ENCODE measurements at regions of chr10 and their contacts with region 1.

Region 1: DNA sequence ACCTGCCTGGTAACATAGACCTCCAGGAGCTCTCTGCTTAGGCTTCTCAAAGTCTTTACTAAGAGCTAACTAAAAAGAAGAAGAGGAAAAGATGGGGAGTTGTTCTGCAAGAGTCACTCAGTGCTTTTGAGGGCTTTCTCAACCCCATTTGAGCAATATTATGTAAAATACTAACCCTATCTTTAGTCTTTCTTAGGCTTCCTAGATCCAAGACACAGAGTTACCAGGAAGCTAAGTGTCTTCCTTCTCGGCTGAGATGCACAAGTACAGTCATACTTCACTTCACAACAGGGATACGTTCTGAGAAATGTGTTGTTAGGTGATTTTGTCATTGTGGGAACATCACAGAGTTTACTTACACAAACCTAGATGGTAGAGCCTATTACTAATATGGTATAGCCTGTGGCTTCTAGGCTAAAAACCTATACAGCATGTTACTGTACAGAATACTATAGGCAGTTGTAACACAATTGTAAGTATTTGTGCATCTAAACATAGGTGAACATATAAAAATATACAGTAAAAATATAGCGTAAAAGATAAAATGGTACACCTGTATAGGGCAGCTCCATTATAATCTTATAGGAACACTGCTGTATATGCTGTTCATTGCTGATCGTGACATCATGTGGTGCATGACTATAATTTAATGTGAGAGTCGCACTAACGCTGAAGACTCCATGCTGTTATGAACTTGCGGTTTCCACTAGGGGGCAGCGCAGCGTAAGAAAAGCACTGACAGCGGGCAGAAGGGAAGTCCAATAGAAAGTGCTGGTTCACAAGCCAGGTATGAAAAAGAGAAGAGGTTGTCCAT is 16.3 kb downstream of the ANKRD22 start:
- DNase-seq: peak; percentile 94
- ATAC-seq: peak; percentile 92
- H3K4me3 Mint-ChIP-seq: no peak overlapping the region
- H3K27ac Mint-ChIP-seq: no peak overlapping the region
- H3K4me1 Mint-ChIP-seq: peaks cover 40% of the 10 kb centered on the region
- H3K27me3 Mint-ChIP-seq: no peaks in the 10 kb centered on the region

Region 2: GRCh38 chr10:88565072-88565471 is 270.2 kb before region 1 on chr10:
- CTCF ChIA-PET with region 1: interaction called, 10 read pairs
- POLR2A ChIA-PET with region 1: no interaction called
- DNase-seq: no peak
- ATAC-seq: peak; percentile 47
- H3K4me3 Mint-ChIP-seq: no peak overlapping the region
- H3K27ac Mint-ChIP-seq: no peak overlapping the region
- H3K4me1 Mint-ChIP-seq: no peaks in the 10 kb centered on the region
- H3K27me3 Mint-ChIP-seq: peaks cover 13% of the 10 kb centered on the region

Region 3: DNA sequence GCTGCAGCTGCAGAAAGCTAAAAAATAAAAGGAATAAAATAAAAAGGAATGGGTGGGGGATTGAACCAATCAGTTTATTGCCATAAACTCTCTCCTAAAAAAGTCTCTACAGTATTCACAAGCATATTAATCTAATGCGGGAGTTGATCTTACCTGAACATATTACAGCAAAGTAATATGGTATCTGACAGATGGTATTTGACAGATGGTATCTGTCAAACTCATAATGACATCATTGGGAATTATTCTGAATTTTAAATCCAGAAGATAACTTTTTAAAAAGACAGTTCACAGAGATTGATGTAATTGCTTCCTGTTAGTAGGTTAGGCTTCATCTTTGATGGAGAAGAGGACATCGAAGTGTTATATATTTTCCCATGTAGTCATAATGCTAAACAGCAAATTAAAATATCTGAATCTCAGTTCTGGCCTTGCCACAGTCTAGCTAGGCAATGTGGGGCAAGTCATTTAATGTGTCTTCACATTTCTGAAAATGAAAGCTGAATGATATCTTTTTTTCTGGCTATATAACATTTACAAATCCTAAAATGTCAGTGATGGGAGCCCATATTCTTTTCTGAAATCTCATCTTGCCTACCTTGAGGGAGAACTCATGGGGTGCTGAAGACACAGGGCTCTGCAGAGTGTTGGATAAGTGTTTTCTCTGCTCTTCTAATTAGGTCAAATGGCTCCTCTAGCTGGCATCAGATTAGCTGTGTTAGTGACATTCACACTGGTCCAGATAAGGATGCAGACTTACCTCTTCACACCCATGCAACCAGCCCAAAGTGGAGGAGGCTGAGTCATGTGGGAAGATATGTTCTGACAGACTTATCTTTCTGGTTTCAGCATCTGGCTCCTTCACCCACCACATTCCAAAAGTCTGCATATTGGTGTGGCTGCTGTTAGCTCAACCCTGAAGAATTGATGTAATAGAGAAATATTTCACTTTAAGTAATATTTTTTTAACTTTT is 34.9 kb before region 1 on chr10:
- CTCF ChIA-PET with region 1: interaction called, 10 read pairs
- POLR2A ChIA-PET with region 1: interaction called, 3 read pairs
- DNase-seq: no peak
- ATAC-seq: no peak
- H3K4me3 Mint-ChIP-seq: no peak overlapping the region
- H3K27ac Mint-ChIP-seq: no peak overlapping the region
- H3K4me1 Mint-ChIP-seq: peaks cover 3% of the 10 kb centered on the region
- H3K27me3 Mint-ChIP-seq: peaks cover 19% of the 10 kb centered on the region

Region 4: DNA sequence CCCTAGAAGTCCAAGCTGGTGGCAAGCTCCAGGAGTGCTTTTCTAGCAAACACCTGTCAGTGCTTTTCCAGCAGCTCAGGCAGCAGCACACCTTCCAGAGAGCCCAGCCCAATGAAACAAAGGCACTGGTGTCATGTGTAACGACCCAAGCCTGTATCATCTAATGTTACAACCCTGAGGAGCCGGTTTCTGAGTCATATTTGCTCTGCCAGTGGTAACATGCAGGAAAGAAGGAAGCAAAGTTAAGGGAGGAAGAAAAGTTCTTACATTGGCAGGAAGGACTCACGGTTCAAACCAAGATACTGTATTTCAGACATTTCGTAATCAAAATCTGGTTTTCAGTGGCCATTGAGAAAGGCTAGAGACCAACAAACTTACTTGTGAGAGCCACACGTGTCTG is 16.4 kb after region 1 on chr10 and contains the start of gene ANKRD22:
- CTCF ChIA-PET with region 1: interaction called, 73 read pairs
- POLR2A ChIA-PET with region 1: interaction called, 3 read pairs
- DNase-seq: no peak
- ATAC-seq: no peak
- H3K4me3 Mint-ChIP-seq: no peak within 1 kb of the TSS
- H3K27ac Mint-ChIP-seq: no peak within 1 kb of the TSS
- H3K4me1 Mint-ChIP-seq: peaks cover 19% of the 10 kb centered on the region
- H3K27me3 Mint-ChIP-seq: no peaks in the 10 kb centered on the region
- total RNA-seq, gene ANKRD22: 0.45 TPM in 1 of 2 experiments, not detected in the other

Region 5: DNA sequence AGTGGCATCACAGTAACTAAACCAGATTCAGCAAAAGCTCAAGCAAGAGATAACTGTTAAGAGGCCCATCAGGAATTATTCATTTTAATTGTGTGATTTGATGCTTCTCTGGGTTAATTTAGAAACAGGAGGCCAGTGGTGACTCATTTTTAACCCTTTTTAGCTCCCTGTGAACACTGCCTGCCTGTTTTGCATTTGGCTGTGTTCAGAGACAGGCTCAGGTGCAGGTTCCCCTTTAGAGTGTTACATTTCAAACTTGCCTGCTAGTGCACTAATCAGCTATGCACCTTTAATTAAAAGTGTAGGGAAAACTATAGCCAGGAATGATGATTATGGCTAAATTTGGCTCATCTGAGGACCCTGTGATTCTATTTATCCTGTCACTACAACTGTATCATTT is 51.3 kb after region 1 on chr10:
- CTCF ChIA-PET with region 1: interaction called, 57 read pairs
- POLR2A ChIA-PET with region 1: no interaction called
- DNase-seq: no peak
- ATAC-seq: no peak
- H3K4me3 Mint-ChIP-seq: no peak overlapping the region
- H3K27ac Mint-ChIP-seq: no peak overlapping the region
- H3K4me1 Mint-ChIP-seq: peaks cover 88% of the 10 kb centered on the region
- H3K27me3 Mint-ChIP-seq: no peaks in the 10 kb centered on the region

Region 6: DNA sequence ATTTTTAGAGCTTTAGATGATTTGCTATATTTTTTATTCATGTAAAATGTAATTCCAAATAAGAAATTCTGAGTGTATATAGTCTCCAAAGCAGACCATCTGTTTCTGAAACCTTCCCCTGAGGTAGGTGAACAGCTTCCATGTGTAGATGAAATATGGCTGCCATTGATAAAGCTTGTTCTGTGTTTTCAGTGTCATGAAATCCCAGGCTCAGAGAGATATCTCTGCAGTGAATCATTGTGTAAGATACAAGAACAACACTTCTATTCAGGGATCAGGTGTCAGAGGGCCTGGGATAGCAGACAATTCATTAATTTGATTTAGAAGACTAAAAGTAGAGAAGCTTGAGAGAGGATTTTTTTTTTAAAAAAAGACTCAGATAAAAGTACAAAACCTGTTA is 88.2 kb after region 1 on chr10:
- CTCF ChIA-PET with region 1: interaction called, 281 read pairs
- POLR2A ChIA-PET with region 1: no interaction called
- DNase-seq: no peak
- ATAC-seq: no peak
- H3K4me3 Mint-ChIP-seq: no peak overlapping the region
- H3K27ac Mint-ChIP-seq: no peak overlapping the region
- H3K4me1 Mint-ChIP-seq: no peaks in the 10 kb centered on the region
- H3K27me3 Mint-ChIP-seq: no peaks in the 10 kb centered on the region